Activated CD4-positive, alpha-beta memory T cell treated with anti-CD3 and anti-CD28 coated beads for 36 hours (primary cell): ENCODE measurements at regions of chr4 and their contacts with region 1.

Region 1: GRCh38 chr4:48830706-48831531 is at the start of gene OCIAD1:
- DNase-seq: peak; percentile 97
- H3K4me3 Mint-ChIP-seq: peak within 1 kb of the TSS; percentile 100
- H3K27ac Mint-ChIP-seq: peak within 1 kb of the TSS; percentile 99
- H3K4me1 Mint-ChIP-seq: peaks cover 19% of the 10 kb centered on the region
- H3K27me3 Mint-ChIP-seq: peaks cover 2% of the 10 kb centered on the region
- total RNA-seq, gene OCIAD1: 100 to 107 TPM

Region 2: GRCh38 chr4:48727666-48728459 is 103.1 kb before region 1 on chr4:
- CTCF ChIA-PET with region 1: no interaction called
- POLR2A ChIA-PET with region 1: no interaction called
- intact Hi-C with region 1: loop called (anchors 5 kb)
- DNase-seq: no peak
- H3K4me3 Mint-ChIP-seq: no peak overlapping the region
- H3K27ac Mint-ChIP-seq: no peak overlapping the region
- H3K4me1 Mint-ChIP-seq: peaks cover 88% of the 10 kb centered on the region
- H3K27me3 Mint-ChIP-seq: no peaks in the 10 kb centered on the region

Region 3: DNA sequence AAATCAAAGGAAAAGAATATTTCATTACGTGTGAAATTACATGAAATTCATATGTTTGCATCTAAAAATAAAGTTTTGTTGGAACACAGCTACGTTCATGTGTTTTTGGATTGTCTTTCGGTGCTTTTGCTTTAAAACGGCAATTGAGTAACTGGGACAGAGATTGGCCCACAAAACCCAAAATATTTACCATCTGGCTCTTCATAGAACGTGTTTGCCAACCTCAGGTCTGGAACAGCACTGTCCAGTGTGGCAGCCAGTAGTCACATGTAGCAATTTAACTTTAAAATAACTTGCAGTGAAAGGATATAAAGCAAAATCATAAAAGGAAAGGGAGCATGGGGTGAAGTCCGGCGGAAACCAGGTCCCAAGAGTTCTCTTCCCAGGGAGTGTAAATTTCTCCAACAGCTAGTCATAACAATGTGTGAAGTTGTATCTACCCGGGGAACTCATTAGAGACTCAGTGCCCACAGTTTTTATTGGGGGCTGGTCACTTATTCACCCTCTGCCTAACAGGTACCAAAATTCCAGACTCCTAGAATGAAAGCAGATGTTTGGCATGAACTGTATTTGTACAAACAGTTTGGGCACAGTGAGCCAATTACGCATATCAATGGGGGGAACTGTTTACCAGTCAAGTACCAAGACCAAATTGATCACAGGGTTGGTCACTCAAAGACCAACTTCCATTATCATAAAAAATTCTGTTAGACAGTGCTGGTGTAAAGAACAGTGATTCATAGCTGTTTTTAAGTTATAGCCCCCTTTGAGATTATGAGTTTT is 10.3 kb after region 1 on chr4:
- CTCF ChIA-PET with region 1: interaction called, 3 read pairs
- POLR2A ChIA-PET with region 1: no interaction called
- intact Hi-C with region 1: loop called (anchors 1 kb)
- DNase-seq: no peak
- H3K4me3 Mint-ChIP-seq: no peak overlapping the region
- H3K27ac Mint-ChIP-seq: no peak overlapping the region
- H3K4me1 Mint-ChIP-seq: peaks cover 12% of the 10 kb centered on the region
- H3K27me3 Mint-ChIP-seq: no peaks in the 10 kb centered on the region

Region 4: GRCh38 chr4:48877827-48878533 is 47.1 kb after region 1 on chr4:
- CTCF ChIA-PET with region 1: no interaction called
- POLR2A ChIA-PET with region 1: no interaction called
- intact Hi-C with region 1: no loop called
- DNase-seq: no peak
- H3K4me3 Mint-ChIP-seq: no peak overlapping the region
- H3K27ac Mint-ChIP-seq: no peak overlapping the region
- H3K4me1 Mint-ChIP-seq: no peaks in the 10 kb centered on the region
- H3K27me3 Mint-ChIP-seq: no peaks in the 10 kb centered on the region